Calu3 (cell line): ENCODE measurements at regions of chr17 and their contacts with region 1.

Region 1: GRCh38 chr17:37813751-37814150 is 68.9 kb upstream of the HNF1B start:
- DNase-seq: no peak
- H3K4me3 Mint-ChIP-seq: no peak overlapping the region
- H3K27ac Mint-ChIP-seq: no peak overlapping the region
- H3K4me1 Mint-ChIP-seq: peaks cover 15% of the 10 kb centered on the region
- H3K27me3 Mint-ChIP-seq: peaks cover 16% of the 10 kb centered on the region
- CTCF ChIP-seq: no peak

Region 2: GRCh38 chr17:37392024-37392590 is 421.6 kb before region 1 on chr17:
- CTCF ChIA-PET with region 1: no interaction called
- intact Hi-C with region 1: no loop called
- DNase-seq: no peak
- H3K4me3 Mint-ChIP-seq: peak overlapping the region; percentile 38
- H3K27ac Mint-ChIP-seq: peak overlapping the region; percentile 9
- H3K4me1 Mint-ChIP-seq: peaks cover 20% of the 10 kb centered on the region
- H3K27me3 Mint-ChIP-seq: no peaks in the 10 kb centered on the region
- CTCF ChIP-seq: no peak

Region 3: GRCh38 chr17:37527249-37527851 is 286.4 kb before region 1 on chr17:
- CTCF ChIA-PET with region 1: interaction called, 55 read pairs
- intact Hi-C with region 1: loop called (anchors 1 kb)
- DNase-seq: peak; percentile 74
- H3K4me3 Mint-ChIP-seq: no peak overlapping the region
- H3K27ac Mint-ChIP-seq: no peak overlapping the region
- H3K4me1 Mint-ChIP-seq: no peaks in the 10 kb centered on the region
- H3K27me3 Mint-ChIP-seq: no peaks in the 10 kb centered on the region
- CTCF ChIP-seq: peak; percentile 94

Region 4: GRCh38 chr17:37643118-37643766 is 170.5 kb before region 1 on chr17 and contains the start of gene DDX52:
- CTCF ChIA-PET with region 1: interaction called, 135 read pairs
- intact Hi-C with region 1: no loop called
- DNase-seq: peak; percentile 99
- H3K4me3 Mint-ChIP-seq: peak within 1 kb of the TSS; percentile 86
- H3K27ac Mint-ChIP-seq: peak within 1 kb of the TSS; percentile 87
- H3K4me1 Mint-ChIP-seq: peaks cover 39% of the 10 kb centered on the region
- H3K27me3 Mint-ChIP-seq: peaks cover 7% of the 10 kb centered on the region
- CTCF ChIP-seq: peak; percentile 36
- total RNA-seq, gene DDX52: 137 and 141 TPM in 2 replicates

Region 5: DNA sequence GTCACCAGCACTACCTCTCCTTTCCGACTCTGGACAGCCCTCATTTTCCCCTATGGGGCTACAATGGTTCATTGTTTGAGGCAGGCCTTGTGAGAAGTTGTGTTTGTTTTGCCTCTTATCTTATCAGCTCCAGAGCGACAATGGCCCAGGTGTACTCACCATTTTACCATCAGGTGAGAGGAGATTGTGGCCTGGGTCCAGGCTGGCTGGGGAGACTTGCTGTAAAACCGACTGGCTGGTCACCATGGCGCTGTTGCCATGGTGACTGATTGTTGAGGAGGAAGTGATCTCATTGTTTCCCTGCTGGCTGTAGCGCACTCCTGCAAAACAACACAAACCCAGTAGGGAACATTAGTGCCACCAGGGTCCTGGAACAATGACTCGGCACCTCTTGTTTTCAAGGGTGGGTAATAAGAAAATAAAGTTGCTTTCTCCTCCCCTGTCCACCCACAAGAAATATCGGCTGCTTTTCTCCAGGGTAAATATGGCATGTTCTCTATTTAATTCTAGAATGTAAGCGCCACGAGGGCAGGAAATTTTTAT is 103.3 kb before region 1 on chr17:
- CTCF ChIA-PET with region 1: interaction called, 29 read pairs
- intact Hi-C with region 1: no loop called
- DNase-seq: peak; percentile 100
- H3K4me3 Mint-ChIP-seq: peak overlapping the region; percentile 63
- H3K27ac Mint-ChIP-seq: peak overlapping the region; percentile 97
- H3K4me1 Mint-ChIP-seq: peaks cover 100% of the 10 kb centered on the region
- H3K27me3 Mint-ChIP-seq: no peaks in the 10 kb centered on the region
- CTCF ChIP-seq: peak; percentile 89

Region 6: DNA sequence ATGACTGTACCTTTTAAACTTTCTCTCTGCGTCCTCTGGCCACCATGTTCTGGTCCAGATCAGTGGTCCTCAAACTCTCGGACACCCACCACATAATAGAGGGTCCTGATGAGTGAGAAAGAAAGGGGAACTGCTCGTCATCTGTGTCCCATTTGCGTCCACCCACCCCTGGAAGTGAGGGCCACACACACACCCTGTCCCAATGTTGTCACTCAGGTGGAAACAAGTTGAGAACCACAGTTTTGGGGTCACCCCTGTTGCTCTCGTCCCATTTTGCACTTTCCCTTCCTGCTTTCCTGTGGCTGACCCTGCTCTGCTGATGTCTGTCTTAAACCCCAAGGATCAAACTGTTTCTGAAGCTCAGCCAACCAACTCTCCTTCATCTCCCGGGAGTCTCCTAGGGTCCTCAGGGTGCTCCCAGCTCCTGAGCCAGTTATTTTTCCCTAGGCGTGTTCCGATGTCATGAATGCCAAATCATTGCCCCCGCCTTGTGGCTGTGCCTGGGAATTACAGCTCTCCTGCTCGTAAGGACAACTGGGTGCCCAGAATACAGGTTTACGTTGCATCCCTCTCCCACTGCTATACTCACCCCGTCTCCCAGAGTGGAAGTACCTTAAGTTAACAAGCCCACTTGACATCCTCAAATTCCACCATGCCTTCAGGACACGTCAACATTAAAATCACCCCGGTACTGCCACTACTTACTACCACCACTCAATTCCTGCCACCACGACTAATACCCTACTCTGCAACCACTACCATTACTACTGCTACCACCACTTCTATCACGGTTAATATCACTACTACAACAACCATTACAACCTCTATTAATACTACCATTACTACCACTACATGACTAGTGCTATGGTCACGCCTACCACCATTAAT is 42.9 kb before region 1 on chr17:
- CTCF ChIA-PET with region 1: interaction called, 51 read pairs
- intact Hi-C with region 1: loop called (anchors 2 kb)
- DNase-seq: peak; percentile 98
- H3K4me3 Mint-ChIP-seq: no peak overlapping the region
- H3K27ac Mint-ChIP-seq: peak overlapping the region; percentile 3
- H3K4me1 Mint-ChIP-seq: peaks cover 26% of the 10 kb centered on the region
- H3K27me3 Mint-ChIP-seq: no peaks in the 10 kb centered on the region
- CTCF ChIP-seq: peak; percentile 100

Region 7: GRCh38 chr17:37833237-37833859 is 19.6 kb after region 1 on chr17:
- CTCF ChIA-PET with region 1: interaction called, 12 read pairs
- intact Hi-C with region 1: no loop called
- DNase-seq: no peak
- H3K4me3 Mint-ChIP-seq: no peak overlapping the region
- H3K27ac Mint-ChIP-seq: no peak overlapping the region
- H3K4me1 Mint-ChIP-seq: peaks cover 7% of the 10 kb centered on the region
- H3K27me3 Mint-ChIP-seq: peaks cover 82% of the 10 kb centered on the region
- CTCF ChIP-seq: no peak